ENCODE measurements at regions of chr1 and their contacts with region 1.

Region 1: GRCh38 chr1:85109475-85109874 is 61.2 kb upstream of the MCOLN3 start:
- DNase-seq: peak; percentile 87
- H3K4me3 ChIP-seq: no peak overlapping the region
- H3K27ac ChIP-seq: no peak overlapping the region
- H3K4me1 ChIP-seq: no peaks in the 10 kb centered on the region
- H3K27me3 ChIP-seq: no peaks in the 10 kb centered on the region
- CTCF ChIP-seq: peak; percentile 87 to 90 (median 89)
- EP300 ChIP-seq: no peak
- POLR2A ChIP-seq: no peak

Region 2: DNA sequence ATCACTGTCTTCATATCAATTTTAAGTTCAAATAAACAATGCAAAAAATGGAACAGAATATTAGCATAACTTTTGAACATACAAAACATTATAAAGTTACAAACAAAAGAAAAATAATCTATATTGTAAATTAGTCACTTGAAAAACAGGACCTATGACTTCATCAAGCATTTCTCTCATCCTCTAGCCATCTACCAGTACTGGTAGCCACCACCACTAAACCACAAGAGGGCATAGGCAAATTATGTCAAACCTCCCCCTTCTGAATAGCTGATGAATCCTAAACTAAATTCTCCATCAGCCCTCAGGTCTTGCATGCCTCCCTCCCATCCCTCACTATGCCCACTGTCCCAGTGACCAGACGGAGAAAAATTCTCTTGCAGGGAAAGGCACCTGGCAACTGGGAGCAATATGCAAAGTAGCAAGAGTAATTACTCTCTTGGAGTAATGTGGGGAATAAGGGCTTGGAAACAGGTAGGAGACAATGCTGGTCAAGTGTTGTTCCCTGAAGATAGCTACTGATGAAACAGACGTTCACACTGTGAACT is 456.3 kb before region 1 on chr1:
- intact Hi-C with region 1: no loop called
- DNase-seq: no peak
- H3K4me3 ChIP-seq: no peak overlapping the region
- H3K27ac ChIP-seq: no peak overlapping the region
- H3K4me1 ChIP-seq: no peaks in the 10 kb centered on the region
- H3K27me3 ChIP-seq: no peaks in the 10 kb centered on the region
- CTCF ChIP-seq: no peak
- EP300 ChIP-seq: no peak
- POLR2A ChIP-seq: no peak

Region 3: GRCh38 chr1:85259118-85259911 is 149.8 kb after region 1 on chr1 and contains the start of gene C1orf52:
- intact Hi-C with region 1: loop called (anchors 1 kb)
- DNase-seq: peak; percentile 97
- H3K4me3 ChIP-seq: peak within 1 kb of the TSS; percentile 69 to 94 (median 88)
- H3K27ac ChIP-seq: peak within 1 kb of the TSS; percentile 76 to 89 (median 84)
- H3K4me1 ChIP-seq: peaks cover 0 to 49% (median 35%) of the 10 kb centered on the region in 4 donors
- H3K27me3 ChIP-seq: no peaks in the 10 kb centered on the region
- CTCF ChIP-seq: peak; percentile 92 to 100 (median 97)
- EP300 ChIP-seq: no peak
- POLR2A ChIP-seq: peak; percentile 57 to 67
- total RNA-seq, gene C1orf52: 8.9 to 31.1 (median 19.4) TPM

Region 4: DNA sequence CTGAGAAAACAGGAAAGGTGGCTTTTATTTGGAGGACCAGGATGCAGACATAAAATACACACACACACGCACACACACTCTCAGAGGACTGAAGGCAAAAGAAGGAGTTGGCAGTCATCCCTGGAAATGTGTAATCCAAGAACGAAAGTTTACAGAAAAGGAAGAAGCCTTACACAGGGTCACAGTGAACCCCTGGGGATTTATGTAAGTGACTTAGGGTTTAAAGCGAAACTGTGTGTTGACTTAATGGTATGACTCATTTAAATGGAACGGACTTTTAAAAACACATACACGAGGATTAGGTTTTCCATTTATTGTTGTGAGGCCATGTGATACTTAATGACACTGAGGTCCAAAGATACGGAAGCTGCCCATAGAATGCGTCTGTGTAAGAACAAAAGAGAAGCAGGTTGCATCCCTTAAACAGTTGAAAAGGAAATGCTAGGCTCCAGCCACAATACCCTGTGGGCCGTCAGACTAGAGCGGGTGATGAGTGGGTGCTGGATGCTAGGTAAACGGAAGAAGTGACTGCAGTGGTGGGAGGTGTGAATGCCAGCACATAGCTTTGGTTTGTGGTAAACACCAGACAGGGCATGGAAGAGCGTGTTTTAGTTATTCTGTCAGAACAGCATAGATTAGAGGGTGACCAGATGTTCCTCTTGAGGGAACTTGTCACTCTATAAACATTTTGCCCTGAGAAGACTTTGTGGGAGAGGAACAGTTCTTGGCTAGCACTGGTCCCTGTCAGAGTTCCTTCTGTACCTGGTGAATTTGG is 188.6 kb after region 1 on chr1:
- intact Hi-C with region 1: no loop called
- DNase-seq: no peak
- H3K4me3 ChIP-seq: peak overlapping the region in 3 of 4 donors; percentile 3 to 17 (median 10)
- H3K27ac ChIP-seq: peak overlapping the region; percentile 66 to 85 (median 78)
- H3K4me1 ChIP-seq: peaks cover 0 to 20% (median 15%) of the 10 kb centered on the region in 4 donors
- H3K27me3 ChIP-seq: no peaks in the 10 kb centered on the region
- CTCF ChIP-seq: no peak
- EP300 ChIP-seq: no peak
- POLR2A ChIP-seq: no peak